Vagina (tissue), 2 donors: ENCODE measurements at regions of chr11 and their contacts with region 1.

Region 1: GRCh38 chr11:18408558-18409242 is 3.4 kb upstream of the LDHC start:
- DNase-seq: no peak
- H3K4me3 ChIP-seq: no peak overlapping the region
- H3K27ac ChIP-seq: no peak overlapping the region
- H3K4me1 ChIP-seq: peaks cover 6% of the 10 kb centered on the region
- H3K27me3 ChIP-seq: no peaks in the 10 kb centered on the region
- CTCF ChIP-seq: no peak
- POLR2A ChIP-seq: no peak

Region 2: GRCh38 chr11:18501629-18502028 is 92.9 kb after region 1 on chr11:
- intact Hi-C with region 1: loop called (anchors 10 kb)
- DNase-seq: no peak
- H3K4me3 ChIP-seq: no peak overlapping the region
- H3K27ac ChIP-seq: no peak overlapping the region
- H3K4me1 ChIP-seq: no peaks in the 10 kb centered on the region
- H3K27me3 ChIP-seq: no peaks in the 10 kb centered on the region
- CTCF ChIP-seq: no peak
- POLR2A ChIP-seq: no peak

Region 3: GRCh38 chr11:18540207-18541009 is 131.7 kb after region 1 on chr11:
- intact Hi-C with region 1: no loop called
- DNase-seq: no peak
- H3K4me3 ChIP-seq: no peak overlapping the region
- H3K27ac ChIP-seq: no peak overlapping the region
- H3K4me1 ChIP-seq: no peaks in the 10 kb centered on the region
- H3K27me3 ChIP-seq: no peaks in the 10 kb centered on the region
- CTCF ChIP-seq: peak in 1 of 3 experiments; percentile 20
- POLR2A ChIP-seq: no peak